ENCODE measurements at regions of chr3 and their contacts with region 1.

Region 1: DNA sequence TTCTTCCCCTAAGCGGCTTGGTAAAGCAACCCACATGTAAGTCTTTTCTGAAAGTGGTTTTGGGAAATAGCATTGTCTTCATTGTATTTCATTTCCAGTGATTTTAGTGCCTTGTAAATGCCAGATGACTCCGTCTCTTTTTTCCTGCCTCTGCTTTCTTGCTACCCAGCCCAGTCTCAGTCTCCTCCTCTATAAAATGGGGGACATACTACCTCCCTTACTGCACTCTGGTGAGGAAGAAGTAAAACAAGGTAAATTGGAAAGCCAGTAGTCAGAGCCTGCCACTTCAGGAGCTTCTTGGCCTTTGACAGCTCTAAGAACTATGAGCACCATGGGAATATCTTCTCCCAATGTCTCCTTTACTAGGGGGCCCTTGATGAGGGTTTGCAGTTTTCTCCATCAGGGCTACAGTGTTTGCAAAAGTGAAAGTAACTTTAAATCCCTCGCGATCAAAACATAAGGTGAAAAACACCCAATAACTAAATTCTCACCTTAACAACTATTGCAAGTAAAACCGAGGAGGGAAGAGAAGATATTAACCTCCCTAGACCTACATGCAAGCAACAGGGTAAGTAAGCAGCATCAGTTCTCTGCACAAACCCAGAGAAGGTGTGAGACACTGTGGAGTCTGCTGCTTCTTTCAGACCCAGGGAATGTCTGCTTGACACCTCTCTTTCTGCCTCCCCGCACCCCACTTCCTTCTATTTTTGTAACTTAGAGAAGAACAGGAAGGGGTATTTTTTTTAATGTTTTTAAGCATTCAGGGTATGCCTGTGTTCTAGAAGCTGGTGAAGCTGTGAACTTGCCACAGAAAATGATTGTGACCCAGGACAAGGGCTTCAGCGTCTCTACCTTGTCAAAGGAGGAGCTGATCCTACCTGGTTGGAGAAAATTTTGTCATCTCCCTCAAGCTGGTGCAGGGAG is 159.1 kb upstream of the EOMES start:
- DNase-seq: peak; percentile 33
- H3K4me3 Mint-ChIP-seq: peak overlapping the region; percentile 72
- H3K27ac Mint-ChIP-seq: peak overlapping the region; percentile 70
- H3K4me1 Mint-ChIP-seq: peaks cover 43% of the 10 kb centered on the region
- H3K27me3 Mint-ChIP-seq: no peaks in the 10 kb centered on the region

Region 2: DNA sequence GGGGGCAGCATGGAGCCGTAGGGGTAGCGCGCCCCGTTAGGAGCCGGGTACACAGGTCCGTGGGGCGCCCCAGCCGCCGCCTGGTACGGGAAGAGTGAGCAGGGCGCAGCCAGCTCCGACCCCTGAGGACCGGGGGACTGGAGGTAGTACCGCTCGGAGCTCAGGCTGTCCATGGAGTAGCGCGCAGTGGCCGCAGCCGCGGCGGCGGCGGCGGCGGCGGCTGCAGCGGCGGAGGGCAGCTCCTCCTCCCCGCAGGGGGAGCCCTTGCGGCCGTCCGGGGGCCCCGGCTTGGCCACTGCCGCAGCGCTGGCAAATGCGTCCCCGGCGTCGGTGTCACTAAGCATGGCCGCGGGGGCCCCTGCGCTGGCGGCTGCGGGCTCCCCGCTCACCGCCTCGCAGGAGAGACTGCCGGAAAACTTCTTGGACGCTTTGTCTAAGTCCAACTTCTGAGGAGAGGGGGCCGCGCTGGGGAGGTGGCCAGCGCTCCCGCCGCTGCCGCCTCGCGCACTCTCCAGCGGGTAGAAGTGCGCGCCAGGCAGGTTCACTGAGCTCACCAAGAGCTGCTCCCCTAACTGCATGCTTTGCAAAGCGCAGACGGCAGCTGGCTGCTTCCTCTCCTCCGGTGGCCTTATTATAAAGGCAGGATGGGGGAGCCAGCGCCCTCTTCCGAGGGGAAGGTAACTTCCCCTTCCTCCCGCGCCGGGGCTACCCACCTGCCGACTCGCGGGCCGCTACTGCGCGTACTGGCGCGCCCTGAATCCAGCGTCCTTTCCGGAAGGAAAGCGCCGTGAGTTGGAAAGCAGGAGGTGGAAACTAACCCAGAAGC is 159.3 kb before region 1 on chr3 and contains the start of gene EOMES:
- CTCF ChIA-PET with region 1: interaction called, 3 read pairs
- POLR2A ChIA-PET with region 1: no interaction called
- intact Hi-C with region 1: loop called (anchors 5 kb)
- DNase-seq: peak; percentile 77
- H3K4me3 Mint-ChIP-seq: peak within 1 kb of the TSS; percentile 78
- H3K27ac Mint-ChIP-seq: no peak within 1 kb of the TSS
- H3K4me1 Mint-ChIP-seq: peaks cover 21% of the 10 kb centered on the region
- H3K27me3 Mint-ChIP-seq: peaks cover 63% of the 10 kb centered on the region
- total RNA-seq, gene EOMES: 1.4 to 1.5 TPM

Region 3: GRCh38 chr3:27900316-27900715 is 19.1 kb after region 1 on chr3:
- CTCF ChIA-PET with region 1: no interaction called
- POLR2A ChIA-PET with region 1: no interaction called
- intact Hi-C with region 1: loop called (anchors 1 kb)
- DNase-seq: no peak
- H3K4me3 Mint-ChIP-seq: no peak overlapping the region
- H3K27ac Mint-ChIP-seq: peak overlapping the region; percentile 11
- H3K4me1 Mint-ChIP-seq: peaks cover 36% of the 10 kb centered on the region
- H3K27me3 Mint-ChIP-seq: no peaks in the 10 kb centered on the region

Region 4: GRCh38 chr3:27905625-27906024 is 24.4 kb after region 1 on chr3:
- CTCF ChIA-PET with region 1: no interaction called
- POLR2A ChIA-PET with region 1: no interaction called
- intact Hi-C with region 1: loop called (anchors 1 kb)
- DNase-seq: peak; percentile 39
- H3K4me3 Mint-ChIP-seq: no peak overlapping the region
- H3K27ac Mint-ChIP-seq: no peak overlapping the region
- H3K4me1 Mint-ChIP-seq: peaks cover 23% of the 10 kb centered on the region
- H3K27me3 Mint-ChIP-seq: no peaks in the 10 kb centered on the region

Region 5: DNA sequence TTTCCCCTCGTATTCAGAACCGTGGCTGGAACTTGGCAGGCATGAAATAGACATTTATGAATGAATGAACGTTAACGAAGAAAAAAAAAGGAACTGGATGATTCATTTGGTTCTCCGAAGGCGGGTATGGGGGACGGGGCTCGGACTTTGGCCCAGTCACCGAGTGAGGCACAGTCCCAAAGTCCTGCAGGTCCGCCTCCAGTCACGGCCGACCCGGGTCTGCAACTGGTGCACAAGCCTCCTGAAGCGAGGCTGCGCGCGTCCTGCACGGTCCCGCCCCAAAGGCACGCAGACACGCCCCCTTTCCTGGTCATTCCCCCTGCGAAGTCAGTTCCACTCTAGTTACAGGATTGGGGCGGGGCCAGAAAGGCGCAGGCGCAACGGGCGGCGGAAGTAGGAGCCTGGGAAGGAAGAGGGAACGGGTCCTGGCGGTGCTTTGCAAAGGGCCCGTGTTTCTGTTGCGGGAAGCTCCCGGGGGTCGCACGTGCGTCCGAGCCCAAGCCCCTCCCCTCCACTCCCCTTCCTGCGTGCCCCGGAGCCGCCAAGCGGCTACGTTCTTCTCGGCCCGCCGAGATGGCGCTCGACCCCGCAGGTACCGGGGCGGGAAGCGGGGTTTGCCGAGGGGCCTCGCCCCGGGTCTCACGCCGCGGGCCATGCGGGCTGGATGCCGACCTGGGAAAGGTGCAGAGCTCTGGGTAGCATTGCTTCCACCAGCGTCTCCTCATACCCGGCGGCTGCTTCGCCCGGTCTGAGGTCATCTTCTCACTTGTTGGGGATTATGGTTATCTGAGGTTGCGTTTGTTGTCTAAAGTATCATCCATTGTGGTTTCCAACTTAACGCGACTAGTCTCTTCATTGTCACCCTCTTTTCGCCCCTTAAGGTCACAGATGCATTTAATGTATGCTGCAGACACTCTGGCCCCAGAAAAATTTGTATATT is 360.3 kb after region 1 on chr3 and contains the start of gene CMC1:
- CTCF ChIA-PET with region 1: no interaction called
- POLR2A ChIA-PET with region 1: no interaction called
- intact Hi-C with region 1: loop called (anchors 5 kb)
- DNase-seq: peak; percentile 96
- H3K4me3 Mint-ChIP-seq: peak within 1 kb of the TSS; percentile 93
- H3K27ac Mint-ChIP-seq: peak within 1 kb of the TSS; percentile 94
- H3K4me1 Mint-ChIP-seq: peaks cover 38% of the 10 kb centered on the region
- H3K27me3 Mint-ChIP-seq: no peaks in the 10 kb centered on the region
- total RNA-seq, gene CMC1: 27.5 to 28.6 TPM

Region 6: GRCh38 chr3:28606283-28606682 is 725.1 kb after region 1 on chr3:
- CTCF ChIA-PET with region 1: no interaction called
- POLR2A ChIA-PET with region 1: no interaction called
- intact Hi-C with region 1: no loop called
- DNase-seq: no peak
- H3K4me3 Mint-ChIP-seq: no peak overlapping the region
- H3K27ac Mint-ChIP-seq: no peak overlapping the region
- H3K4me1 Mint-ChIP-seq: no peaks in the 10 kb centered on the region
- H3K27me3 Mint-ChIP-seq: no peaks in the 10 kb centered on the region

Measured in activated CD4-positive, alpha-beta memory T cell treated with anti-CD3 and anti-CD28 coated beads for 36 hours (primary cell).